Naive thymus-derived CD4-positive, alpha-beta T cell (primary cell): ENCODE measurements at regions of chr16 and their contacts with region 1.

Region 1: GRCh38 chr16:77211880-77212740 is 12.9 kb downstream of the SYCE1L start:
- DNase-seq: peak; percentile 57 to 84 (median 76)
- ATAC-seq: peak; percentile 86
- H3K4me3 ChIP-seq: peak overlapping the region; percentile 69
- H3K4me3 Mint-ChIP-seq: peak overlapping the region; percentile 83 to 92 (median 88)
- H3K27ac ChIP-seq: peak overlapping the region; percentile 85
- H3K27ac Mint-ChIP-seq: peak overlapping the region; percentile 56 to 92 (median 81)
- H3K4me1 ChIP-seq: peaks cover 0 to 4% of the 10 kb centered on the region in 2 donors
- H3K4me1 Mint-ChIP-seq: peaks cover 8 to 15% (median 14%) of the 10 kb centered on the region in 7 donors
- H3K27me3 ChIP-seq: no peaks in the 10 kb centered on the region
- H3K27me3 Mint-ChIP-seq: peaks cover 0 to 5% (median 0%) of the 10 kb centered on the region in 5 donors

Region 2: DNA sequence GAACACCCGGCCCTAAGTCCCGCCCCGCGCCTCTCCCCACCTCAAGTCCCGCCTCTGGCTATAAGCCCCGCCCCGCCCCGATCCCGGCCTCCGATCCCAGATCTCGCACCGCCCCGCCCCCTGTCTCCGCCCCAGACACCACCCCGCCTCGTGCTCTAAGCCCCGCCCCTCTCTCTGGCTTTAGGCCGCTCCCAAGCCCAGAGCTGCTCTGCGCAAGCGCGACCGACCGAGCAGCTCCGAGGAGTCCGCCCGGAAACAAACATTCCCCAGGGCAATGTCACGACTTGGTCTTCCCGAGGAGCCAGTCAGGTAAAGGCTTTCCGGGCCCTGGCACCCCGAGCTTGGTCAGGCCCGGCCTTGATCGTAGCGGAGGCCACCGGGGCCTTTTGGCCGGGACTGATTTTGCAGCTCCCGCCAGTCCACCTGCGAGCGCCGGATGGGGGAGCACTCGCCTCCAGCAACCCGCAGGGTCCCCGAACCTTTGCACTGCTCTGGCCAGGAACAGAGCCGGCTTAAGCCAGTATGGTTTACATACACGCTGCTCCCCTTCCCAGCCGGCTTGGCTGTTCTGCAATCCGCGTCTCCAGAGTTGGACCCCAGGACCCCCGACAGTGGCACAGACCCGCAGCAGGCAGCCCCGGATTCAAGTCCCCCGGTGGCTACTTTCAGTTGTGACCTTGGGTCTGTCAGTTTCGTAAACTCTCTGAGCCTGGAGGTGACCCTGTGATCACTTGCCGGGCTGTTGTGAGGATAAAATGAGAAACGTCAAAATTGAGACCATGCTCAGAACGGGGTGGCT is 510.4 kb after region 1 on chr16 and contains the start of gene NUDT7:
- CTCF ChIA-PET with region 1: no interaction called
- POLR2A ChIA-PET with region 1: no interaction called
- intact Hi-C with region 1: loop called (anchors 1 to 2 kb)
- DNase-seq: peak; percentile 78 to 98 (median 88)
- ATAC-seq: peak; percentile 98
- H3K4me3 ChIP-seq: peak within 1 kb of the TSS; percentile 76
- H3K4me3 Mint-ChIP-seq: peak within 1 kb of the TSS; percentile 86 to 94 (median 90)
- H3K27ac ChIP-seq: peak within 1 kb of the TSS; percentile 71
- H3K27ac Mint-ChIP-seq: peak within 1 kb of the TSS; percentile 51 to 91 (median 85)
- H3K4me1 ChIP-seq: peaks cover 5 to 9% of the 10 kb centered on the region in 2 donors
- H3K4me1 Mint-ChIP-seq: peaks cover 7 to 21% (median 15%) of the 10 kb centered on the region in 7 donors
- H3K27me3 ChIP-seq: no peaks in the 10 kb centered on the region
- H3K27me3 Mint-ChIP-seq: no peaks in the 10 kb centered on the region
- total RNA-seq, gene NUDT7: 2.1 to 10.9 (median 8.2) TPM